T-cell (primary cell): ENCODE measurements at regions of chr16 and their contacts with region 1.

Region 1: GRCh38 chr16:10188236-10188635 is 6.0 kb upstream of the GRIN2A start:
- DNase-seq: no peak
- ATAC-seq: no peak
- H3K4me3 ChIP-seq: no peak overlapping the region
- H3K4me3 Mint-ChIP-seq: no peak overlapping the region
- H3K27ac ChIP-seq: no peak overlapping the region
- H3K27ac Mint-ChIP-seq: no peak overlapping the region
- H3K4me1 ChIP-seq: no peaks in the 10 kb centered on the region
- H3K4me1 Mint-ChIP-seq: peaks cover 0 to 3% (median 2%) of the 10 kb centered on the region in 3 donors
- H3K27me3 ChIP-seq: peaks cover 2 to 9% of the 10 kb centered on the region in 2 experiments
- H3K27me3 Mint-ChIP-seq: peaks cover 28 to 36% of the 10 kb centered on the region in 2 donors

Region 2: GRCh38 chr16:10250137-10250850 is 62.1 kb after region 1 on chr16:
- CTCF ChIA-PET with region 1: no interaction called
- POLR2A ChIA-PET with region 1: interaction called in 1 of 2 experiments, 15 read pairs
- DNase-seq: no peak
- ATAC-seq: no peak
- H3K4me3 ChIP-seq: no peak overlapping the region
- H3K4me3 Mint-ChIP-seq: no peak overlapping the region
- H3K27ac ChIP-seq: no peak overlapping the region
- H3K27ac Mint-ChIP-seq: no peak overlapping the region
- H3K4me1 ChIP-seq: no peaks in the 10 kb centered on the region
- H3K4me1 Mint-ChIP-seq: no peaks in the 10 kb centered on the region
- H3K27me3 ChIP-seq: peaks cover 0 to 7% of the 10 kb centered on the region in 2 experiments
- H3K27me3 Mint-ChIP-seq: peaks cover 3% of the 10 kb centered on the region in 2 donors

Region 3: GRCh38 chr16:10385725-10386516 is 197.7 kb after region 1 on chr16 and contains the start of gene ATF7IP2:
- CTCF ChIA-PET with region 1: no interaction called
- POLR2A ChIA-PET with region 1: no interaction called
- DNase-seq: peak; percentile 73 to 89 (median 82)
- ATAC-seq: peak; percentile 93 to 98 (median 96)
- H3K4me3 ChIP-seq: peak within 1 kb of the TSS; percentile 76 to 94
- H3K4me3 Mint-ChIP-seq: peak within 1 kb of the TSS; percentile 94 to 96 (median 94)
- H3K27ac ChIP-seq: peak within 1 kb of the TSS; percentile 47
- H3K27ac Mint-ChIP-seq: peak within 1 kb of the TSS; percentile 92 to 96
- H3K4me1 ChIP-seq: peaks cover 17 to 27% of the 10 kb centered on the region in 2 experiments
- H3K4me1 Mint-ChIP-seq: peaks cover 46 to 61% (median 47%) of the 10 kb centered on the region in 3 donors
- H3K27me3 ChIP-seq: no peaks in the 10 kb centered on the region
- H3K27me3 Mint-ChIP-seq: no peaks in the 10 kb centered on the region
- total RNA-seq, gene ATF7IP2: 49.1 to 97.1 (median 56.7) TPM